ENCODE measurements at regions of chr2 and their contacts with region 1.

Region 1: GRCh38 chr2:36530178-36530982 is 67.6 kb downstream of the FEZ2 start:
- DNase-seq: peak; percentile 43
- ATAC-seq: peak; percentile 94
- H3K4me3 ChIP-seq: no peak overlapping the region
- H3K27ac ChIP-seq: no peak overlapping the region
- H3K4me1 ChIP-seq: peaks cover 24% of the 10 kb centered on the region
- H3K27me3 ChIP-seq: no peaks in the 10 kb centered on the region
- CTCF ChIP-seq: no peak
- EP300 ChIP-seq: peak in 1 of 2 experiments; percentile 41; a peak in 2 of 4 replicates
- POLR2A ChIP-seq: no peak
- RAD21 ChIP-seq: no peak

Region 2: DNA sequence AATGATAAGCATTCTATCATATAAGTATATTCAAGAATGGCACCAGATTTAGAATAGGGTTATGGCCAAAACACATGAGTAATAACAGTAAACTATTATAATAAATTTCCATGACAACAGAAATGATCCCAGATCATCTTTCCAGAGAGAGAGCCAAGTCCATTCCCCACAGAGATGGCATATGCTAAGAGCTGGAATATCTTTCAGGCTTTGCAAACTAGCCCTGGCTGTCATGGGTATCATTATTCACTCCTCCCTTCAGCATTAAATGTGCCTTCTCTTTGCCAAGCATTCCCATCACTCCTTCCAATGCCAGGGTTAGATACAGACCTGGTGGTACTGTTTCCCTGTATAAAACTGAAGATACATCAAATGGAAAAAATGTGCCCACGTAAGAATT is 56.7 kb after region 1 on chr2:
- CTCF ChIA-PET with region 1: no interaction called
- POLR2A ChIA-PET with region 1: no interaction called
- RAD21 ChIA-PET with region 1: no interaction called
- SMC1A ChIA-PET with region 1: no interaction called
- in situ Hi-C with region 1: no loop called
- intact Hi-C with region 1: no loop called
- DNase-seq: no peak
- ATAC-seq: no peak
- H3K4me3 ChIP-seq: no peak overlapping the region
- H3K27ac ChIP-seq: no peak overlapping the region
- H3K4me1 ChIP-seq: no peaks in the 10 kb centered on the region
- H3K27me3 ChIP-seq: no peaks in the 10 kb centered on the region
- CTCF ChIP-seq: no peak
- EP300 ChIP-seq: no peak
- POLR2A ChIP-seq: no peak
- RAD21 ChIP-seq: no peak

Region 3: DNA sequence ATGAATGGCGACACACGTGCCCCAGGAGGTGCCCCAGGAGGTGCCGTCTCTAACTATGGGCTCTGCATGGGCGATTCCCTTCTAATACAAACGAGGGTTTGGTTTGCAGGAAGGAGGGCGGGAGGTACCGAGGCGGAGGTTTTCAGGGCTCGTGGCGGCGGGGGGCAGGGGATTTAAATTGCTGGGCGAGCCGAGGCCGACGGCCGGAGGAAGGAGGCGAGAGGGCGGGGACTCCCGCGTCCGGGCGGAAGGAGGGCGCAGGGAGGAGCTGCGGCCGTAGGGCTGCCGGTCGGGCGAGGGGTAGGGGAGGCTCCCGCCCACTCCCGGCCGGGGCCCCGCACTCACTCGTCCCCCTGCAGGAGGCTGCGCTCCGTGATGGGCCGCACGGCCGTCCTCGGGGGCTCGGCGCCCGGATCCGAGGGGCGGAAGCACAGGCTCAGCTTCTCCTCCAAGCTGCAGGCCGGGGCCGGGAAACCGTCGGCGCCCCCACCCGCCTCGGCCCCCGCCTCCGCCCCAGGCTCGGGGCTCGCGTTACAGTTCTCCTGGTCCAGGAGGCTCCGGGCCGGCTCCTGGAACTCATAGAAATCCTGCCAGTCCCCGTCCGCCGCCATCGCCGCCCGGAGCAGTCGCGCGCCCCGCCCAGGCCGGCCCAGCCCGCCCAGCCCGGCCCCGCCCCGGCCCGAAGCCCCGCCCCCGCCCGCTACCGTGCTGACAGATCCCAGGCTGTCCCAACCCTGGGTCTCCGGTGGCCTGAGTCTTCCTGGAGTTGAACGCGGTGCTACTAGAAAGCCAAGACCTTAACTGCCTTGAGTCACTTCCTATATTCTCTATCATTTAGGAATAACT is 67.4 kb after region 1 on chr2 and contains the start of gene FEZ2:
- CTCF ChIA-PET with region 1: no interaction called
- POLR2A ChIA-PET with region 1: no interaction called
- RAD21 ChIA-PET with region 1: no interaction called
- SMC1A ChIA-PET with region 1: interaction called, 3 read pairs
- in situ Hi-C with region 1: no loop called
- intact Hi-C with region 1: loop called (anchors 2 kb)
- DNase-seq: peak; percentile 24
- ATAC-seq: peak; percentile 99
- H3K4me3 ChIP-seq: peak within 1 kb of the TSS; percentile 80
- H3K27ac ChIP-seq: peak within 1 kb of the TSS; percentile 65; the same call in 1 of the 2 replicates
- H3K4me1 ChIP-seq: no peaks in the 10 kb centered on the region
- H3K27me3 ChIP-seq: no peaks in the 10 kb centered on the region
- CTCF ChIP-seq: no peak
- EP300 ChIP-seq: no peak
- POLR2A ChIP-seq: peak; percentile 89
- RAD21 ChIP-seq: no peak
- polyA plus RNA-seq, gene FEZ2: 3.0 to 3.8 TPM